Sigmoid colon (tissue), 7 donors: ENCODE measurements at regions of chr2 and their contacts with region 1.

Region 1: DNA sequence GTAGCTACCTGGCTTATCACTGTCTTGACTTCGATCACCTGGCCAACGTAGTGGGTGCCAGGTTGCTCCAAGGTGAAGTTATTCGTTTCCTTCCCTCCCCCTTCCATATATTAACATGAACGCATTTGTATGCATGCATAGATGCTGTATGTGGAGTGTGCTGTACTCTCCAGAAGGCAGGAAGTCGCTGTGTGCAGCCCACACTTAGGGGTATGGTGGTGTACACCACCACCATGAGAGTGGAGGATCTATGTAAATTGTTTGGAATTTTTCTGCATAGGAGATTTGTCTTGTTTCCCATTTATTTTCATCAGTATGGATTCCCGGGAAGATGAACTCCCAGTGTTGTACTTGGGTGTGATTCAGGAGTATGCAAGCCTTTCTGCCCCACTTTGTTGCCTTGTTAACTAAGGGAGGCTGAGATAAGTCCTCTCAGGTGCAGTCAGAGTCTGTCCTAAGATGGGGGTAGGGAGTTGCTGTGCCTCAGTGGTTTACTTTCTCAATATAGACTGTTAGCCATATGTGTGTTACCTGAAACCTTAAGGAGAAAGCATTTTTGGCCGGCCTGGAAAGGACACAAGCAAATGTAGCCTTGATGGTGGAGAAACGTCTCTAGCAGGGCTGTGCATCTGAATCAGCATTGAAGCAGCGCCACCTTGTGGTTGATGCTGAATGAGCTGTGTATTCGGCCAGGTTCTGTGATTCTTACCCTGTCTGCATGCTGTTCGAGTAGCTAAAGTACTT is 149.8 kb downstream of the TANC1 start:
- DNase-seq: peak; percentile 90
- H3K4me3 ChIP-seq: no peak overlapping the region
- H3K27ac ChIP-seq: peak overlapping the region in 2 of 4 donors; percentile 51 to 59
- H3K4me1 ChIP-seq: peaks cover 0 to 34% (median 25%) of the 10 kb centered on the region in 4 donors
- H3K27me3 ChIP-seq: no peaks in the 10 kb centered on the region
- CTCF ChIP-seq: peak; percentile 71 to 90 (median 84)
- EP300 ChIP-seq: no peak
- POLR2A ChIP-seq: no peak

Region 2: GRCh38 chr2:158903711-158904443 is 214.4 kb before region 1 on chr2:
- intact Hi-C with region 1: loop called (anchors 1 kb)
- DNase-seq: no peak
- H3K4me3 ChIP-seq: no peak overlapping the region
- H3K27ac ChIP-seq: peak overlapping the region in 1 of 4 donors; percentile 51
- H3K4me1 ChIP-seq: peaks cover 0 to 29% (median 22%) of the 10 kb centered on the region in 4 donors
- H3K27me3 ChIP-seq: no peaks in the 10 kb centered on the region
- CTCF ChIP-seq: no peak
- EP300 ChIP-seq: peak in 1 of 4 donors; percentile 13
- POLR2A ChIP-seq: no peak